PC-9 (cell line): ENCODE measurements at regions of chr12 and their contacts with region 1.

Region 1: DNA sequence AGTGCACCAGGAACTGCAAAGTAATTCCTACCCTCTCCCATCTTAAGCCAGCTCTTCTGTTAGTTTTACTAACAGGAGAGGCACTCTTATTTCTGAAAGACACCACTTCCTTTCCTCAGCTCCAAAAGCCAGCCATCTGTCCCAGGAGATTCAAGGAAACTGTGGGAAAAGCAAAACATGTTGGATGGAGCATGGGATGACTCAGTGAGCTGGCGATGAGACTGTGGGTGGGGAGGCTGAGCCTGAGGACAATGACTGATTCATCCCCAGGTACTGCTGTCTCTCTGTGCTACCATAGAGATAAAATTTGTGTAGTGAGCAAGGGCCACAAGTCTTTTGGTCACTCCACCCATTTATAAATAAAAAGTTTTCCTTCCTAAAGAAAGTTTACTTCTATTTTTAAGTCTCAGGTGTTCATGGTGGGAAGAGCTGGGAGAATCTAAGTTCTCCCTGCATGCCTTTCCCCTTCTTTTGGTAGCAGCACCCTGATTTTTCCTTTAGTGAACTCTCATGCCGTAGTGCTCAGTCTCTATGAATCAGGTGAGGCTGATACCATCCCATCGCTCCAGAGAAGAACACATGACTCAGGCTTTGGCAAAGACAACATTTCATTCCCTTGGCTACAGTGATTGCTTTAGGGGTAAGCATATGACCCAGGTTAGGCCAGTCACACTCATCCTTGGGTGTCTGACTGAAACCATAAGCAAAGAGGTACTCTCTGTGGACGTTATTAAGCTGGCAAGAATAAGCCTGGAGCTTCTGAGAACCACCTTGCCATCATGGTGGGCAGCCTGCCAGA is 141.6 kb downstream of the MYRFL start:
- DNase-seq: peak; percentile 49 to 57
- H3K4me3 ChIP-seq: no peak overlapping the region
- H3K27ac ChIP-seq: peak overlapping the region; percentile 81
- H3K4me1 ChIP-seq: peaks cover 20% of the 10 kb centered on the region
- H3K27me3 ChIP-seq: no peaks in the 10 kb centered on the region
- CTCF ChIP-seq: no peak

Region 2: DNA sequence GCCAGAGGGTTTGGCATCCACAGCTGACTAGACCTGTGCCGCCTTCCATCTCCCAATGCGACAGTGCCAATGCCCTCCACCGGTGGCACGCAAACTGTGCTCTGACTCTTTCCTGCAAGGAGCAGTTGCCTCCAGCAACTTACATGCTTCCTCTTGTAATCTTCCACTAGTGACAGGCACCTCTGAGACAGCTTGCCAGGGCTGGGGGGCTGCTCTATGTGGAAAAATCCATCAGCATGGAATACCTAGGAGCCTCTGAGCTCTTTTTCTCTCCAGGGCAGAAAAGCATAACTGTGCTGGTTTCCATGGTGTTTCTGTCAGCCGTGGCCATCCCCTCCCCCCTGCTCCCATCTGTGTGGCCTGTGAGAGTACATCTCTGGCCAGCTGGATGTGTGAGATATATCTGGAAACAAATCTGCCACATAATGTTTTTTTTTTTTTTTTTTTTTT is 30.9 kb before region 1 on chr12:
- CTCF ChIA-PET with region 1: no interaction called
- POLR2A ChIA-PET with region 1: no interaction called
- intact Hi-C with region 1: loop called (anchors 2 kb)
- DNase-seq: peak in 1 of 2 experiments; percentile 5
- H3K4me3 ChIP-seq: no peak overlapping the region
- H3K27ac ChIP-seq: peak overlapping the region; percentile 24; the same call in 1 of the 2 replicates
- H3K4me1 ChIP-seq: peaks cover 21% of the 10 kb centered on the region
- H3K27me3 ChIP-seq: no peaks in the 10 kb centered on the region
- CTCF ChIP-seq: no peak

Region 3: DNA sequence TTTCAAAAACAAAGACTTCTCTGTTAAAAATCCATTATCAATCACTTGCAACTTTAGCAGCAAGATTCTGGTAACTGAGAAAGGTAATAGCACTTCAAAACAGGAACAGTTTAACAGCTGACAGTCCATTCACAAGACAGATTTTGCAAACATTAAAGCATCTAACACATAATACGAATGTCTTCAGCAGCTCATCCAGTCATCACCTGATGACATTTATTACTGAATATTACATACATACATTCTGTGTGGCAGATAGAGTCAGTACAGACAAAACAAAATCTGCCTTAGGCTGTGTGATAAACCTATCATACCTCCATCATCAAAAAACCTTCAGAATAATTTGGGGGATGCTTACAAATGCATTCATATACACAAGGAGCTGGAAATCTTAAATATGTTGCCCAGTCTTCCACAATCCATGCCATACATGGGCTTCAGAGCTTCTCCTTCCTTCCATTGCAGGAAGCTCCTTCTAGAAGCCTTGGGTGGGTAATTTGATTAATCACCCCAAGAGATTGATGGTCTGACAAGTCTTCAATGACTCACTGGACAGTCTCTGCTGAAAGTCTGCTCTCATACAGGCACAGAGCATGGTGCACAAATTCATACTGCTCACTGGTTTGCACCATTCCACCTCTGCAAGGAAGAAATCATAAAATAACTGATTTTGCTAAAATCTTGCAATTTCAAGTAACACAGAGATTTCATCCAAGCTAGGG is 672.2 kb after region 1 on chr12:
- CTCF ChIA-PET with region 1: no interaction called
- POLR2A ChIA-PET with region 1: interaction called, 24 read pairs
- intact Hi-C with region 1: no loop called
- DNase-seq: no peak
- H3K4me3 ChIP-seq: no peak overlapping the region
- H3K27ac ChIP-seq: no peak overlapping the region
- H3K4me1 ChIP-seq: peaks cover 13% of the 10 kb centered on the region
- H3K27me3 ChIP-seq: no peaks in the 10 kb centered on the region
- CTCF ChIP-seq: no peak